Mammary epithelial cell (primary cell): ENCODE measurements at regions of chr15 and their contacts with region 1.

Region 1: DNA sequence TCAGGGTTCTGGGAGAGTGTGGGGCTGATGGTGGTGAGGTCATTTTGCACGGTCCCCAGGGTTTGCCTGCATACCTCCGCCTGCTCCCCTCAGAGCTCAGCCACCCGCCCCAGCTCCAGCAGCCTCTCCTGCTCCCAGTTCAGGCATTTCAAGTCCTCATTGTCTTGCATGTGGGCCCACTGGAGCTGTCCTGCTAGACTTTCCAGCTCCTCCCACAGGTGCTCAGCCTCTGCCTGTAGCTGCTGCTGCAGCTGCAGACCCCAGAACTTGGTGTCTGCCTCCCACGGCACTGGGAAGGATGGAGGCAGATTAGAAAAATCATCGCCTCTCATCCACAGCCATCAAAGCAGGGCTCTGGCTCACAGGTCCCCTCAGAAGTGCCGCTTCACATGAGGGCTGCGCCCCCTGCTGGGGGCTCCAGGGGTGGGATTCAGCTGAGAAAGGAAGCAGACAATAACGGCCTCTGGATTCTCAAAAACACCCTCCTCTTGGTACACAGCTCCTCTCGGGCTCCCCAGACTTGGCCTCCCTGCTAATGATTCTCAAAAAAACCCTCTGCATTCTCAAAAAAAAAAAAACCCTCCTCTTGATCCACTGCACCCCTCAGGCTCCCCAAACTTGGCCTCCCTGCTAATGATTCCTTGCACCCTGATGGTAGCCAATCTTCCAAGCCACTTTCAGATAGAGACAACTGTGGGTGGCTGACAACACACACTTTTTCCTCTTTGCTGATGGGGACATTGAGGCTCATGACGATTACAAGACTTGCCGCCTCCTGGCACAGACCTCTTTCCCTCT is 89.3 kb upstream of the C2CD4B start:
- DNase-seq: peak; percentile 43
- H3K4me3 ChIP-seq: no peak overlapping the region
- H3K27ac ChIP-seq: no peak overlapping the region
- H3K4me1 ChIP-seq: no peaks in the 10 kb centered on the region
- H3K27me3 ChIP-seq: peaks cover 2% of the 10 kb centered on the region
- CTCF ChIP-seq: peak; percentile 61 to 88

Region 2: DNA sequence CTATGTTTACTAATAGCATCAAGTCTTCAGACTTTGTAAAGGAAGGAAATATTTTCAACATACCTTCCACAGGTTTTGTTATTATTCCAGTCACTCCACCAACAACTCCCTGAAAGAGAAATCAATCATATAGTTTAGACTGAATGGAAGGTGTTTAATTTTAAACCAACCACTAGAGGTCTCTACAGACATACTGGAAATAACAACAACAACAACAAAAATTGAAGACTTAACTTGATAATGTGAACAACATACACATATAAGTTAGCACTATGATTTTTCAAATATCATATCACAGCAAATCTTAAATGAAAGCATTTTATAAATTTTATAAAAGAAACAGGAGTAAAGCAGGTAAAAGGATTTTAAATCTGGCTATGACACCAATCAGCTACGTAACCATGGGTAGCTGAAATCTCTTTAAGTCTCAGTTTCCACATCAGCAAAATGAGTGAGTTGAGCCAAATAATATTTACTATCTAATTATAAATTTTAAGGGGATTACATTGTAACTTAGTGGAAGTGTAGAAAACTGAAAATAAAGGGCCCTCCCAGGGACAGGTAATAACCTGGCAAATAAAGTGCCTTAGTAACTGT is 382.3 kb before region 1 on chr15:
- CTCF ChIA-PET with region 1: no interaction called
- dilution Hi-C with region 1: no loop called
- in situ Hi-C with region 1: no loop called
- intact Hi-C with region 1: loop called (anchors 1 kb)
- DNase-seq: no peak
- H3K4me3 ChIP-seq: no peak overlapping the region
- H3K27ac ChIP-seq: no peak overlapping the region
- H3K4me1 ChIP-seq: no peaks in the 10 kb centered on the region
- H3K27me3 ChIP-seq: no peaks in the 10 kb centered on the region
- CTCF ChIP-seq: peak; percentile 55 to 57

Region 3: GRCh38 chr15:62083168-62084154 is 170.9 kb before region 1 on chr15:
- CTCF ChIA-PET with region 1: no interaction called
- dilution Hi-C with region 1: no loop called
- in situ Hi-C with region 1: no loop called
- intact Hi-C with region 1: loop called (anchors 2 kb)
- DNase-seq: no peak
- H3K4me3 ChIP-seq: no peak overlapping the region
- H3K27ac ChIP-seq: no peak overlapping the region
- H3K4me1 ChIP-seq: no peaks in the 10 kb centered on the region
- H3K27me3 ChIP-seq: no peaks in the 10 kb centered on the region
- CTCF ChIP-seq: no peak

Region 4: DNA sequence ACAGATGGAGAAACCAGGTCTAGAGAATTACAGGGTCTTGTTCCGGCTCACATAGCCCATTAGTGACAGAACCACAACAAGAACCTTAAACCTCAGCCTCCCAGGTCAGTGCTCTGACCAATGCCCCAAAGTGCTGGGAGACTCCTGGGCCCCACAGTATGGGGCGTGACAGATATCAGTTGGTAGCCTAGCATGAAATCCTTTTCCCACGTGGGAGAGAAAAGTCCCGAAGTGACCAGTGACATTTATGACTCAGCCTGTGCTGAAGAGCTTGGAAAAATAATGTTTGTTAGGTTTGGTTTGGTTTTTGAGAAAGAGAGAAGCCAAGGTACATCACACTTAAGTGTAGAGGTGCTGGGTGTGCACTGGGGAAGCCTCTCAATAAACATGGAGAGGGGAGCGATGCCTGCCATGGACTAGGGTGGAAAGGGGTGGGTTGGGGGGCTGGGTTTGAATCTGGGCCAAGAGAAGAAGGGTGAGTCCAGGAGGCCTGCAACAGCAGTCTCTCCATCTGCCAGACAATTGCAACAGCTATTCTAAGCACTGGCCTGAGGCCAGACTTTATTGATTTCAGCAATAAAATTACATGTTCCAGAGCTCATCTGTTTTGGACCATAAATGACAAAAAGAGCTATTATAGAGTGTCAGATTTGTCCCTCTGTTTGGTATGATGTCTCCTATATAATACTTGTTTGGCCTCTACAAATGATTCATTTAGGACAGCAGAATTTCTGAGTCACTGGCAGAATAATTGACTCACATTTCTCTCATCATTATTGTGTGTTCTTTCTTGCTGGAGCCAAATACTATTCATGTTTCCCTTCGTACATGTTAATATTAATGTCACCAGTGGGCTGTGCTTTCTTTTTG is 144.1 kb before region 1 on chr15:
- CTCF ChIA-PET with region 1: no interaction called
- dilution Hi-C with region 1: no loop called
- in situ Hi-C with region 1: no loop called
- intact Hi-C with region 1: no loop called
- DNase-seq: peak; percentile 77
- H3K4me3 ChIP-seq: no peak overlapping the region
- H3K27ac ChIP-seq: peak overlapping the region; percentile 11
- H3K4me1 ChIP-seq: peaks cover 39% of the 10 kb centered on the region
- H3K27me3 ChIP-seq: no peaks in the 10 kb centered on the region
- CTCF ChIP-seq: no peak

Region 5: GRCh38 chr15:62125773-62126172 is 128.6 kb before region 1 on chr15:
- CTCF ChIA-PET with region 1: interaction called, 7 read pairs
- dilution Hi-C with region 1: no loop called
- in situ Hi-C with region 1: no loop called
- intact Hi-C with region 1: loop called (anchors 1 kb)
- DNase-seq: peak; percentile 60
- H3K4me3 ChIP-seq: no peak overlapping the region
- H3K27ac ChIP-seq: no peak overlapping the region
- H3K4me1 ChIP-seq: no peaks in the 10 kb centered on the region
- H3K27me3 ChIP-seq: no peaks in the 10 kb centered on the region
- CTCF ChIP-seq: peak; percentile 67 to 80